Activated naive CD4-positive, alpha-beta T cell treated with anti-CD3 and anti-CD28 coated beads for 36 hours (primary cell): ENCODE measurements at regions of chr18 and their contacts with region 1.

Region 1: DNA sequence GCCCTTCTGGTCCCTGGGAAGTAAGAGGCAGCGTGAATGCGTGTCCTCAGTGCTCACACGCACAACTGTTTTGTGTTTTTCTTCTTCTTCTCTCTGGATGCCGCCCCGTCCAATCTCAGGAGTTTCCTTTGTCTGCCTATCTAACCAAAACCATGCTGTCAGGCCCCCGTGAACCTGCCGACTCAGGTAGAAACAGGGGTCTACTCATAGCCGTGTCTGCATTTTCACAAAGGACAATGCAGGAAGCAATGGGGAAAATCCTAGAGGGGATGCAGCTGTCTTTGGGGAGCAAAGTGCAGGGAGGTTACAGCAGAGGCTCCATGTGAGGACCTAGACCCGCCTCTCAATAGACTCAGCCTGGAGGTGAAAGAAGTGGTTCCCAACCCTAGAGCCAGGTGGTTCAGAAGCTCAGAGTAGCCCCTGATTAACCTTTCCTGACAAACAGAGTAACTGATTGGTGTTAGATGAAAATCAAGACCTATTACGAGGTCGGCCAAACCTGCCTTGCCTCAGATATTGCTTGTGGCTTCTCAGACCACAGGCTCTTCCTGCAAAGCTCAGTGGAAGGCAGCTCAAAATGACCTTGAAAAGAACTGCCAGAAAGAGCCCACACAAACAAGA is 49.3 kb downstream of the CD226 start:
- DNase-seq: peak; percentile 47
- H3K4me3 Mint-ChIP-seq: peak overlapping the region; percentile 75
- H3K27ac Mint-ChIP-seq: peak overlapping the region; percentile 92
- H3K4me1 Mint-ChIP-seq: peaks cover 61% of the 10 kb centered on the region
- H3K27me3 Mint-ChIP-seq: no peaks in the 10 kb centered on the region

Region 2: DNA sequence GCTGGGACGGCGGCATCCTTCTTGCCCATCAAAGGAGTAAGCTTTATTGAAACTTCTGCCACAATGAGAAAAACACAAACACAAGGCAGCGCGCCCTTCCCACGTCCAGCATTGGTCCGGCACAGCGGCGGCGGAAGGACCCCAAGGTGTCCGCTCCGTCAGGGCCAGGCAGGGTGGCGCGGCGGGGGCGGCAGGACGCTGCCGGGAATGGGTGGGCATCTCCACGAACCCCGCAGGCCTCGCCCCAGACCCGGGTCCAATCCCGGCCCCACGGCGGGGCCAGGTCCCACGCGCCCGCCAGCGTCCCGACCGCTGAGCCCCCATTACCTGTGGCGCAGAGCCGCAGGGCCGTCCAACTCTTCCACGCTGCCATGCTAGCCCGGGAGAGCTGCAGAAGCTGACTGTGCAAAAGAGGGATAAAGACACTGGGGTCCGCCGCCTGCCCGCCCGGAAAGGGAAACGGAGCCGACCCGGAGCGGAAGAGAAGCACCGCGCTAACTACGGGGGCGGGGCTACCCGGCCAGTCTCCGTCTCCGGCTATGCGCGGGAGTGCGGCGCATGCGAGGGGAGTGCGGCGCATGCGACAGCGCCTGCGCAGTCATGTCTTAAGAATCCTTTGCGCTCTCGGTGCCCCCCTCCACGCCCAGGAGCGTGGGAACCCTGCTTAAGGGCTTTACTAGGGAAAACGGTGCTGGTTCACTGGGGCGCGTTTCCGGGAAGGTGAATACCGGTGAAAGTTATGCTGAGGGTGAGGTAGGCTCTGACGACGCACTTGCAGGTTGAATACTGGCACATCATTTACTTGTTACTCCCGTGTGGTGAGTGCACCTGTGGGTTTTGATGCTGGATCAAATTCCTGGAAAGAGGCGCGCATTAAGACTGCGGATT is 1183.5 kb before region 1 on chr18 and contains the start of gene TMX3:
- CTCF ChIA-PET with region 1: no interaction called
- intact Hi-C with region 1: loop called (anchors 10 kb)
- DNase-seq: peak; percentile 90
- H3K4me3 Mint-ChIP-seq: peak within 1 kb of the TSS; percentile 96
- H3K27ac Mint-ChIP-seq: peak within 1 kb of the TSS; percentile 92
- H3K4me1 Mint-ChIP-seq: peaks cover 33% of the 10 kb centered on the region
- H3K27me3 Mint-ChIP-seq: no peaks in the 10 kb centered on the region
- total RNA-seq, gene TMX3: 35.5 to 41.3 TPM

Region 3: GRCh38 chr18:69495841-69496533 is 402.4 kb before region 1 on chr18:
- CTCF ChIA-PET with region 1: no interaction called
- intact Hi-C with region 1: no loop called
- DNase-seq: no peak
- H3K4me3 Mint-ChIP-seq: no peak overlapping the region
- H3K27ac Mint-ChIP-seq: no peak overlapping the region
- H3K4me1 Mint-ChIP-seq: no peaks in the 10 kb centered on the region
- H3K27me3 Mint-ChIP-seq: peaks cover 5% of the 10 kb centered on the region

Region 4: DNA sequence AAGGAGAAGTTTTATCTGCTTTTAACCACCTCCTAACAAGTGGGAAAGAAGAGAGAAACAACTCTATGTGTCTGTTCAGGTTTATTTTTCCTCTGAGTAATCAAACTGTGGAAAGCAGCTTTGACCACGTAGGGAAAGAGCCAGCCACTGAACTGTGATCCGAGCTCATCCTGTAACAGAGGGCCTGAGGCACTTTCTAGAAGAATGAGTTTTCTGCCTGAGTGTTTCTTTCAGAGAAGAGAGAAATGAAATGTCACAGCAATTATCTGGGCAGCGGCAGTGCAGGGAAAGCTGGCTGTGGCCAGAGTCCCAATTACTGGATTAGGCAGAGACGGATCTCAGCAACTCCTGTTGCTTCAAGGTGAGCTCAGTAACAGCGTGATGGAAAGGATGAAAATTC is 102.6 kb before region 1 on chr18:
- CTCF ChIA-PET with region 1: no interaction called
- intact Hi-C with region 1: no loop called
- DNase-seq: no peak
- H3K4me3 Mint-ChIP-seq: no peak overlapping the region
- H3K27ac Mint-ChIP-seq: no peak overlapping the region
- H3K4me1 Mint-ChIP-seq: no peaks in the 10 kb centered on the region
- H3K27me3 Mint-ChIP-seq: no peaks in the 10 kb centered on the region

Region 5: DNA sequence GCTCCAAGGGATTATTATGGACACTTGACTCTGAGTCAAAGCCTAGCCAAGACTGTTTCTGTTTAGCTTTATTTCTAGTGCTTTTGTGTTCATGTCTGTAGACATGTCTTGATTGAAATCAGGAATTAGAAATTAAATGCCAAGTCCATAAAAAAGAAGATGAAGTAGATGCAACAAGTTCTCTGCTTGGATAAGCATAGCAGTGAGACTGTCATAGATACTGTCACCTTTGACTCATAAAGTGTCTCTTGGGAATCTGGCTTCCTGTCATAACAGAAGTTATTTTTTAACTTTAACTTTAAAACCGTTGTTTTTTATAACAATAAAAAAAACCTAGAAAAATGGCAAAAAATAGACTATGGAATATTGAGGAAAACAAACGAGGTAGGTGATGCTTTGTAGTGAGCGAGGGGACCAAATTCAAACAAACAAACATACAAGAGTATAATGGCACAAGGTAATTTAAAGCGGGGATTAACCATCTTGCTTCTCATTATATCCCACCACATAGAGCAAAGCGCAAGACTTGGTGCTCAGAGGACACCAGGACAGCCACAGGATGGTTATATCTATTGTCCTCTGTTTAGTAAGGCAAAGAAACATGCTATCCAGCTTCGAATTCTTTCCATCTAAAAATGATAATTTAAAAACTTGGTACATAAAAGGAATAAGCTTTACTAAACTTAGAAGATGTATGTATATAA is 15.2 kb before region 1 on chr18:
- CTCF ChIA-PET with region 1: no interaction called
- intact Hi-C with region 1: loop called (anchors 1 kb)
- DNase-seq: no peak
- H3K4me3 Mint-ChIP-seq: no peak overlapping the region
- H3K27ac Mint-ChIP-seq: peak overlapping the region; percentile 26
- H3K4me1 Mint-ChIP-seq: peaks cover 37% of the 10 kb centered on the region
- H3K27me3 Mint-ChIP-seq: no peaks in the 10 kb centered on the region

Region 6: GRCh38 chr18:69935319-69936190 is 37.2 kb after region 1 on chr18:
- CTCF ChIA-PET with region 1: interaction called, 19 read pairs
- intact Hi-C with region 1: loop called (anchors 1 kb)
- DNase-seq: peak; percentile 92
- H3K4me3 Mint-ChIP-seq: no peak overlapping the region
- H3K27ac Mint-ChIP-seq: no peak overlapping the region
- H3K4me1 Mint-ChIP-seq: peaks cover 41% of the 10 kb centered on the region
- H3K27me3 Mint-ChIP-seq: no peaks in the 10 kb centered on the region

Region 7: GRCh38 chr18:69958422-69958821 is 60.1 kb after region 1 on chr18:
- CTCF ChIA-PET with region 1: interaction called, 3 read pairs
- intact Hi-C with region 1: loop called (anchors 1 kb)
- DNase-seq: peak; percentile 66
- H3K4me3 Mint-ChIP-seq: peak overlapping the region; percentile 27
- H3K27ac Mint-ChIP-seq: no peak overlapping the region
- H3K4me1 Mint-ChIP-seq: peaks cover 24% of the 10 kb centered on the region
- H3K27me3 Mint-ChIP-seq: no peaks in the 10 kb centered on the region

Region 8: GRCh38 chr18:70085641-70086040 is 187.3 kb after region 1 on chr18:
- CTCF ChIA-PET with region 1: no interaction called
- intact Hi-C with region 1: no loop called
- DNase-seq: no peak
- H3K4me3 Mint-ChIP-seq: no peak overlapping the region
- H3K27ac Mint-ChIP-seq: no peak overlapping the region
- H3K4me1 Mint-ChIP-seq: no peaks in the 10 kb centered on the region
- H3K27me3 Mint-ChIP-seq: no peaks in the 10 kb centered on the region

Region 9: DNA sequence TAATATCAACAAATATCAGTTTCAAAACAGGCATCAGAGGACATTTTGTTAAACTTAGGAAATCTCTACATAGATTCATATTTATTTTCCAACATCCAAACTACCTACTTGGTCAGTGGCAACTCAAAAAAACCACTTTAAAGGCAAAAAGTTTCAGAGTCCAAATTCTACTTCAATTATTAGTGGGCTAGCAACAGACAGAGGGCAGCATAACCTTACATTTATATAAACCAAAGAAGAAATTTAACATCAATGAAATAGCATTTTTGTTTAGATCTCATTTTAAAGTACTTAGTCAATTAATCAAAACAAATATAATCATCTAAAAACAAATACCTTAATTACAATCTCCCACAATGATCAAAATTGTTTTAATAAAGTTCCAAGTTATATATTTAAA is 273.9 kb after region 1 on chr18:
- CTCF ChIA-PET with region 1: no interaction called
- intact Hi-C with region 1: no loop called
- DNase-seq: no peak
- H3K4me3 Mint-ChIP-seq: no peak overlapping the region
- H3K27ac Mint-ChIP-seq: no peak overlapping the region
- H3K4me1 Mint-ChIP-seq: no peaks in the 10 kb centered on the region
- H3K27me3 Mint-ChIP-seq: no peaks in the 10 kb centered on the region

Region 10: GRCh38 chr18:70205421-70206397 is 307.4 kb after region 1 on chr18 and contains the start of gene RTTN:
- CTCF ChIA-PET with region 1: no interaction called
- intact Hi-C with region 1: loop called (anchors 10 kb)
- DNase-seq: peak; percentile 94
- H3K4me3 Mint-ChIP-seq: peak within 1 kb of the TSS; percentile 97
- H3K27ac Mint-ChIP-seq: peak within 1 kb of the TSS; percentile 98
- H3K4me1 Mint-ChIP-seq: peaks cover 20% of the 10 kb centered on the region
- H3K27me3 Mint-ChIP-seq: peaks cover 2% of the 10 kb centered on the region
- total RNA-seq, gene RTTN: 30.2 to 32.0 TPM